CD4-positive, alpha-beta T cell (primary cell): ENCODE measurements at regions of chr3 and their contacts with region 1.

Region 1: DNA sequence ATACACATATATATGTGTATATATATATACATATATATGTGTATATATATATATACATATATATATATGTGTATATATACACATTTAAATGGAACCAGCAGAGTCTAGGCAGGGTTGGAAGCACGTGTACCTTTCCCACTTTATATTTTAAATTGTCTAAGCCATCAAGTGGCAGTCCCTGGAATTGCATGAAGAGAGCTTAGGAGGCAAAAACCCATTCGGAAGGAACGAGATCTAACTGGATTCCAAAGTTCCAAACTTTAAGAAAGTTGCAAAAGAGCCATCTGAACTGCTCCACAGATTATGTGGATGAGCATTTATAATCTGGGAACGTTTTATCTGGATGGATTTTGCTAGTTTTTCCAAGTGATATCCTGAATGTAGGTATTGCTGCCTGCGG is 186.5 kb downstream of the FOXP1 start:
- DNase-seq: peak in 3 of 14 experiments; percentile 36 to 52 (median 47)
- ATAC-seq: no peak
- H3K4me3 ChIP-seq: no peak overlapping the region
- H3K4me3 Mint-ChIP-seq: peak overlapping the region; percentile 40
- H3K27ac ChIP-seq: peak overlapping the region; percentile 21 to 91
- H3K27ac Mint-ChIP-seq: peak overlapping the region; percentile 91
- H3K4me1 ChIP-seq: peaks cover 29% of the 10 kb centered on the region
- H3K4me1 Mint-ChIP-seq: peaks cover 85% of the 10 kb centered on the region
- H3K27me3 ChIP-seq: no peaks in the 10 kb centered on the region
- H3K27me3 Mint-ChIP-seq: no peaks in the 10 kb centered on the region
- CTCF ChIP-seq: peak; percentile 34

Region 2: GRCh38 chr3:71360764-71361163 is 36.3 kb before region 1 on chr3:
- CTCF ChIA-PET with region 1: interaction called, 3 read pairs
- POLR2A ChIA-PET with region 1: interaction called, 3 read pairs
- intact Hi-C with region 1: loop called in 1 of 2 experiments (anchors 5 kb)
- DNase-seq: peak in 2 of 14 experiments; percentile 22 to 36
- ATAC-seq: peak; percentile 55
- H3K4me3 ChIP-seq: peak overlapping the region; percentile 5
- H3K4me3 Mint-ChIP-seq: peak overlapping the region; percentile 72
- H3K27ac ChIP-seq: peak overlapping the region; percentile 10 to 50
- H3K27ac Mint-ChIP-seq: peak overlapping the region; percentile 76
- H3K4me1 ChIP-seq: peaks cover 50% of the 10 kb centered on the region
- H3K4me1 Mint-ChIP-seq: peaks cover 86% of the 10 kb centered on the region
- H3K27me3 ChIP-seq: no peaks in the 10 kb centered on the region
- H3K27me3 Mint-ChIP-seq: no peaks in the 10 kb centered on the region
- CTCF ChIP-seq: no peak

Region 3: GRCh38 chr3:71369701-71370391 is 27.2 kb before region 1 on chr3:
- CTCF ChIA-PET with region 1: no interaction called
- POLR2A ChIA-PET with region 1: interaction called, 3 read pairs
- intact Hi-C with region 1: loop called in 1 of 2 experiments (anchors 1 kb)
- DNase-seq: no peak
- ATAC-seq: no peak
- H3K4me3 ChIP-seq: no peak overlapping the region
- H3K4me3 Mint-ChIP-seq: no peak overlapping the region
- H3K27ac ChIP-seq: no peak overlapping the region
- H3K27ac Mint-ChIP-seq: peak overlapping the region; percentile 87
- H3K4me1 ChIP-seq: peaks cover 41% of the 10 kb centered on the region
- H3K4me1 Mint-ChIP-seq: peaks cover 82% of the 10 kb centered on the region
- H3K27me3 ChIP-seq: no peaks in the 10 kb centered on the region
- H3K27me3 Mint-ChIP-seq: no peaks in the 10 kb centered on the region
- CTCF ChIP-seq: no peak

Region 4: DNA sequence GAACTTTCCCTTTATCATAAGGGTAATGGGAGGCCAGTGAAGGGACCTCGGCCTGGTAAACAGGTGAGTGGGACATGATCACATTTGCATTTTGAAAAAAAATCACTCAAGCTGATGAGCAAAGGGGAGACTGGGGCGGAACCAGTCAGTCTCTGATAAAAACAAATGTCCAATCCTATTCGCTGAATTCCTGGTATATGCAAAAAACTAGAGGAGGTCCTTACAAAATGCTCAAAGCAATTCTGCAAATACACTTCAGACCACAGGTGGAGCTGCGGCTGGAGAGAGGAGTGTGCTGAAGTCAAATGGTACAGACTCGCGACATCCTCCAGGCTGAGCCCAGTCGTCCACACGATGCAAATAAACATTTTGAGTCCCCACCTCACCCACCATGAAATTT is 19.8 kb after region 1 on chr3:
- CTCF ChIA-PET with region 1: interaction called, 12 read pairs
- POLR2A ChIA-PET with region 1: interaction called, 15 read pairs
- intact Hi-C with region 1: loop called in 1 of 2 experiments (anchors 2 kb)
- DNase-seq: peak in 8 of 14 experiments; percentile 12 to 75 (median 52)
- ATAC-seq: peak; percentile 68
- H3K4me3 ChIP-seq: no peak overlapping the region
- H3K4me3 Mint-ChIP-seq: peak overlapping the region; percentile 70
- H3K27ac ChIP-seq: peak overlapping the region in 1 of 2 donors; percentile 42
- H3K27ac Mint-ChIP-seq: peak overlapping the region; percentile 91
- H3K4me1 ChIP-seq: peaks cover 45% of the 10 kb centered on the region
- H3K4me1 Mint-ChIP-seq: peaks cover 94% of the 10 kb centered on the region
- H3K27me3 ChIP-seq: no peaks in the 10 kb centered on the region
- H3K27me3 Mint-ChIP-seq: no peaks in the 10 kb centered on the region
- CTCF ChIP-seq: peak; percentile 40

Region 5: DNA sequence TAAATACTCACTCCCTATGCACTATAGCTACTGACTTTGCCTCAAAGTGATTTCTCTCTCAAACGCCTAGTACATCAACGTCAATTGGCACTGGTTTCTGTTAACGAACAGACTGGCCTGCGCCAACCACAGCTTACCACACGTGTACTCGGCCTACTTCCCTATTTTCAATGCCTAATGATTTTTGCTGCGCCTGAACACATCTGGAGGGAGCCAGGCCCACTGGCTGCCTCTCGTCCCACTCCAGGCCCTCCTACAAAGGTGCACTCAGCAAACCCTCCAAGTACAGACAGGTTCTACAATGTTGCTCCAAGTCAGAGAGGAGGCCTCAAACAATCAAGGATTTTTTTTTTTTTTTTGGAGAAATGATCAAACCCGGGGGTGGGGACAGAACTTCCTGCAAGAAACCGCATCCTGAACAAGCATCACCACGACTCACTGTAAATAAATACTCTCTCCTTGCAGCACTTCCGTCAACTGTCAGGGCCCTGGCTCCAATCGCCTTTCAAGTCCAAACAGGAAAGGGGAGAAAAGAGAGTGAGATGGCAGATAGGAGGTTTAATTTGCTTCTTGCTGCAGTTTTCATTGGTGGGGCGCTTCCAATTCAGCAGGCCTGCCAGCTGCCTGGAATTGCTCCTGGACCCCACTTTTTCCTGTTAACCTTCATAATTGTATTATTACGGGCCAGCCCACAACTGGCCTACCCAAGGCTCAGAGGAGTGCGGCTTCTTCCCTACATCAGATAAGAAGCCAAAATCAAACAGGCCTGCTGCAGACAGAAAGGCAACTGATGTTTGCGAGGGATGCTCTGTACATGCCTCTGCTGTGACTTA is 47.2 kb after region 1 on chr3:
- CTCF ChIA-PET with region 1: interaction called, 4 read pairs
- POLR2A ChIA-PET with region 1: interaction called, 7 read pairs
- intact Hi-C with region 1: loop called in 1 of 2 experiments (anchors 2 kb)
- DNase-seq: peak; percentile 53 to 95 (median 68)
- ATAC-seq: peak; percentile 78
- H3K4me3 ChIP-seq: no peak overlapping the region
- H3K4me3 Mint-ChIP-seq: peak overlapping the region; percentile 79
- H3K27ac ChIP-seq: peak overlapping the region; percentile 67 to 82
- H3K27ac Mint-ChIP-seq: peak overlapping the region; percentile 94
- H3K4me1 ChIP-seq: peaks cover 97% of the 10 kb centered on the region
- H3K4me1 Mint-ChIP-seq: peaks cover 97% of the 10 kb centered on the region
- H3K27me3 ChIP-seq: no peaks in the 10 kb centered on the region
- H3K27me3 Mint-ChIP-seq: no peaks in the 10 kb centered on the region
- CTCF ChIP-seq: no peak